Activated CD4-positive, alpha-beta T cell treated with anti-CD3 and anti-CD28 coated beads, Interleukin-2, amount 10 ng/mL, durations not matched to agents 24 days and 14 days (primary cell): ENCODE measurements at regions of chr21 and their contacts with region 1.

Region 1: GRCh38 chr21:28516991-28517592 is 475.6 kb downstream of the LTN1 start:
- DNase-seq: peak; percentile 88
- H3K4me3 Mint-ChIP-seq: no peak overlapping the region
- H3K27ac Mint-ChIP-seq: no peak overlapping the region
- H3K4me1 Mint-ChIP-seq: no peaks in the 10 kb centered on the region
- H3K27me3 Mint-ChIP-seq: peaks cover 10% of the 10 kb centered on the region

Region 2: DNA sequence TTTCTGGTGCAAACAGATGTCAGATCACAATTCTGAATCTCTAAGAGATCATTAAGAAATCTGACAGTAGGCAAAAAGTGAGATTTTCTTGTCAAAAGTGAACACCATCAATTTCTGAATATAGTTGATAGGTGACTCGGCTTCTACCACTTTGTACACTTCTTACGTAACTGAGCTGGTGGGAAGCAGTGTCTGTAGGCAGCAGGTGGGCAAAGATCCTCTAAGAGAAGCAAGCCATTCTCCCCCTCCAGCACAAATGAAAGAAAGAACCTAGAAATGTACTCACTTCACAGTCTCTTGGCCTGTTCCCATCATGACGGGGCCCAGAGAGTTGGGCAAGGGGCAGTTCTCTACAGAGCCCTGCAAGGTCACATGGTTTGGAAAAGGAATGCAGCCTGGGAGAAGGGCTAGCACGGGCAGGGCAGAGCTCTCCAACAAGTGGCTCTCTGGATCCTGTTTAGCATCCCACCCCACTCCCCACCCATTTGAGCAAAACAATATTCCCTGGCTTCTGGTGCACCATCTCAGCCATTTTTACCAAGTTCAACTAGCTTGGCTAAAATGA is 63.0 kb after region 1 on chr21:
- intact Hi-C with region 1: no loop called
- DNase-seq: no peak
- H3K4me3 Mint-ChIP-seq: no peak overlapping the region
- H3K27ac Mint-ChIP-seq: no peak overlapping the region
- H3K4me1 Mint-ChIP-seq: no peaks in the 10 kb centered on the region
- H3K27me3 Mint-ChIP-seq: no peaks in the 10 kb centered on the region

Region 3: GRCh38 chr21:28944296-28944695 is 427.2 kb after region 1 on chr21:
- intact Hi-C with region 1: loop called (anchors 10 kb)
- DNase-seq: no peak
- H3K4me3 Mint-ChIP-seq: no peak overlapping the region
- H3K27ac Mint-ChIP-seq: no peak overlapping the region
- H3K4me1 Mint-ChIP-seq: peaks cover 8% of the 10 kb centered on the region
- H3K27me3 Mint-ChIP-seq: no peaks in the 10 kb centered on the region